Right cardiac atrium (tissue), 5 donors: ENCODE measurements at regions of chr6 and their contacts with region 1.

Region 1: GRCh38 chr6:75493400-75494064 is at the start of gene FILIP1:
- DNase-seq: peak; percentile 52 to 78 (median 69)
- ATAC-seq: peak; percentile 95
- H3K4me3 ChIP-seq: peak within 1 kb of the TSS; percentile 96
- H3K27ac ChIP-seq: peak within 1 kb of the TSS; percentile 75
- H3K4me1 ChIP-seq: peaks cover 2% of the 10 kb centered on the region
- H3K27me3 ChIP-seq: no peaks in the 10 kb centered on the region
- total RNA-seq, gene FILIP1: 110 to 131 (median 118) TPM

Region 2: GRCh38 chr6:75368151-75368779 is 125.3 kb before region 1 on chr6:
- intact Hi-C with region 1: loop called in 1 of 4 experiments (anchors 10 kb)
- DNase-seq: peak in 1 of 3 donors; percentile 50
- ATAC-seq: peak; percentile 62 to 65
- H3K4me3 ChIP-seq: no peak overlapping the region
- H3K27ac ChIP-seq: peak overlapping the region; percentile 55
- H3K4me1 ChIP-seq: peaks cover 11% of the 10 kb centered on the region
- H3K27me3 ChIP-seq: no peaks in the 10 kb centered on the region

Region 3: GRCh38 chr6:75424618-75425548 is 68.6 kb before region 1 on chr6:
- intact Hi-C with region 1: loop called in 3 of 4 experiments (anchors 10 kb)
- DNase-seq: no peak
- ATAC-seq: no peak
- H3K4me3 ChIP-seq: no peak overlapping the region
- H3K27ac ChIP-seq: no peak overlapping the region
- H3K4me1 ChIP-seq: peaks cover 14% of the 10 kb centered on the region
- H3K27me3 ChIP-seq: no peaks in the 10 kb centered on the region

Region 4: DNA sequence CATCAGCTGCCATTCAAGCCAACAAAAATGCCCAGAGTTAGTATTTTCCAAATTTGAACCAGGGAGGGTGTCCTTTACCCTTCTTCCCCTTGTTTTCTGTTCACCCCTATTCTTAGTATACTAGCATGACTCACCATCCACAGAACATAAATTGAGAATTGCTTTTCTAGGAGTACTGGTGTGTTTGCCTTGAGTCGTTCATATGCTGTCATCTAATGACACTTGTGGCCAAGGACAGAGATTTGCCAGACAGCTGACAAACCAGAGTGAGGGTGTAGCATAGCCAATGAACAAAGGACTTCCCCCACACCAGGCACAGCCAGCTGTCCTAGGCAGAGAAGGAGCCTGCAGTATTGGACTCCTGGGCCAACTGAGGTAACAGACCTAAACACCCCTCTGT is 62.2 kb before region 1 on chr6:
- intact Hi-C with region 1: loop called in 3 of 4 experiments (anchors 10 kb)
- DNase-seq: peak in 2 of 3 donors; percentile 41 to 67
- ATAC-seq: peak; percentile 88 to 89
- H3K4me3 ChIP-seq: no peak overlapping the region
- H3K27ac ChIP-seq: peak overlapping the region; percentile 68
- H3K4me1 ChIP-seq: peaks cover 10% of the 10 kb centered on the region
- H3K27me3 ChIP-seq: no peaks in the 10 kb centered on the region

Region 5: DNA sequence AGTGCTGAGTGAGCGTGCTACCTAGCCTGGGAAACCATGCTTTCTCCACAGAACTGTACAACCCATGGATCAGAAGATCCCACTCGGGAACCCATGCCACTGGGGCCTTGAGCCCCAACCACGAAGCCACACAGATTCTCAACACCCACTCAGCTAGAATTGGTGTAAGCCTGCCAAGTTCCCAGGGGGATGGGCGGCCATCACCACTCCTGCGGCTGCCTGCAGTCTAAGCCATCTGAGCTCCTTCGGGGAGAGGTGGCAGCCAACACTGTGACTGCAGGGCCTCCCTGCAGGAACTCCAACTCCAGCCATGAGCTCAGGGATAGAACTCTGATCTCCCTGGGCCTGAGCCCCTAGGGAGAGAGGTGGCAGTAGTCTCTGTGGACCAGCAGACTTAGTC is 74.6 kb after region 1 on chr6:
- intact Hi-C with region 1: no loop called
- DNase-seq: no peak
- ATAC-seq: no peak
- H3K4me3 ChIP-seq: no peak overlapping the region
- H3K27ac ChIP-seq: no peak overlapping the region
- H3K4me1 ChIP-seq: no peaks in the 10 kb centered on the region
- H3K27me3 ChIP-seq: no peaks in the 10 kb centered on the region